ENCODE measurements at regions of chr9 and their contacts with region 1.

Region 1: DNA sequence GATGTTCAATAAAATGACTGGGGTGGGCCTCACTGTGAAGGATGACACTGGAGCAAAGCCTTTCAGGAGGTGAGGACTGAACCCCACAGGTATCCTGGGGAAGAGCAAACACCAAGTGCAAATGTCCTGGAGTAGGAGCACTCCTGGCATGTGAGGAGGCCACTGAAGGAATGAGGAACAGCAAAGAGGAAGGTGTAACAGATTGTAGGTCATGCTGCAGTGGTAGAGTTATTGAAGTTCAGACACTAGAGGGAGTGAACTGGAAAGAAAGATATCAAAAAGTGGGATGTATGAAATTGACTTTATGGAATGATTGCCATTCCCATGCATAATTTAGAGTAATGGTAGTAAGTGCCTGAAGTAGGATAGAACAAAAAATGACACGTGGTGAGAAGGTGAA is 21.8 kb downstream of the KCNV2 start:
- DNase-seq: no peak
- H3K4me3 ChIP-seq: no peak overlapping the region
- H3K27ac ChIP-seq: no peak overlapping the region
- H3K4me1 ChIP-seq: no peaks in the 10 kb centered on the region
- H3K27me3 ChIP-seq: no peaks in the 10 kb centered on the region
- CTCF ChIP-seq: no peak
- POLR2A ChIP-seq: no peak

Region 2: DNA sequence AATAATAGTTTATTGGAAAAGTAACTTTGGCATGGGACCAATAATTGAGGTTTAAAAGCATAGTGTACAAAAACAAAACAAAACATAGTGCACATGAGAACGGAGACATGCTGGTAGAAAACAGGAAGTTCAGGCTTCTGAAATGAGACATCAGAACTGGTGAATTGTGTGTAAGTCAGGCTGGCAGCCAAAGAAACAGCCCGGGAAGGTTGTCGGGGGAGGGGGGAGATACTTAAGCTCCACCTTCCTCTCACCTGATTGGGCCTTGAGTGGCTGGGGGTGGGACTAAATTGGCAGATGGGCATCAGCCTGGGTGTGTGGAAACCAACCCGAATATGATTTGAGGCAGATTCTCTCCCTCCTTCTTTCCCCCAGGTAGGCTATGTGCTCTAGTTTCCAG is 467.6 kb before region 1 on chr9:
- intact Hi-C with region 1: no loop called
- DNase-seq: no peak
- H3K4me3 ChIP-seq: no peak overlapping the region
- H3K27ac ChIP-seq: no peak overlapping the region
- H3K4me1 ChIP-seq: no peaks in the 10 kb centered on the region
- H3K27me3 ChIP-seq: no peaks in the 10 kb centered on the region
- CTCF ChIP-seq: no peak
- POLR2A ChIP-seq: no peak

Region 3: DNA sequence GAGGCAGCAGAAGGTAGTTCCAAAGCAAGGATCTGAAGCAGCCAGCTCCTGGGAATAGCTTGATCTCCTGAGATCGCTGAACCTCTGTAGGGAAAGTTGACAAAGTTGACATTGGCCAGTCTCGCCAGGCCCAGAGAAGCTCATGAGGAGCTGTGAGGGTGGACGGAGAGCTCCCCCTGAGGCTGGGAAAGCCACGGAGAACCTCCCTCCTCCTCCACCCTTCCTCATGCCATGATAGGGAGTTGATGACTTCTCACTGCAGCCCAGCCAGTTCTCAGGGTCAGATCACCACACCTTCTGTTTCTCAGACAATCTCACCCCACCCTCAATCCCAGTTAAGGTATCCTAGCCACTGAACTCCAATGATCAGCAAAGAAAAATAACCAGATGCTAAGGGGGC is 52.2 kb before region 1 on chr9:
- intact Hi-C with region 1: no loop called
- DNase-seq: no peak
- H3K4me3 ChIP-seq: no peak overlapping the region
- H3K27ac ChIP-seq: no peak overlapping the region
- H3K4me1 ChIP-seq: no peaks in the 10 kb centered on the region
- H3K27me3 ChIP-seq: no peaks in the 10 kb centered on the region
- CTCF ChIP-seq: no peak
- POLR2A ChIP-seq: no peak

Region 4: GRCh38 chr9:2837915-2838314 is 98.9 kb after region 1 on chr9:
- intact Hi-C with region 1: loop called (anchors 10 kb)
- DNase-seq: no peak
- H3K4me3 ChIP-seq: no peak overlapping the region
- H3K27ac ChIP-seq: peak overlapping the region; percentile 1 to 13
- H3K4me1 ChIP-seq: peaks cover 10% of the 10 kb centered on the region
- H3K27me3 ChIP-seq: no peaks in the 10 kb centered on the region
- CTCF ChIP-seq: peak in 2 of 4 experiments; percentile 35 to 49
- POLR2A ChIP-seq: no peak